ENCODE measurements at regions of chr1 and their contacts with region 1.

Region 1: DNA sequence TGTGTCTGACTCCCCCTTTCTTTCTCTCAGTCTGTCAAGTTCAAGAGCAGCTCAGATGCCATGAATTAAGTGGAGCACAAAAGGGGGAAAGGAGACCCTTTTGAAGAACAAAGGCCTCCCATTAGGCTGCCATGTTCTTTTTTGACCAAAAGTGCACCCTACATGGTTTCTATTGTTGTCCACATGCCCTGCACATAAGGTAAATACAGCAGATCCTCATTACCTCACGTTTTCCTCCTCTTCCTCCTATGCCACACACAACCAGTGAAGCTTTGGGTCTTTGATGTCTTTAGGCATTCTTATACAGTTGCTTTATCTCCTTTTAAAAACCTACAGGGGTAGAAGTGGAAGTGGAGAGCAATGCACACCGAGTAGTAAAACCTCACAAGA is 47.7 kb downstream of the POU2F1 start:
- DNase-seq: no peak
- ATAC-seq: no peak

Region 2: GRCh38 chr1:167244244-167244643 is 24.1 kb before region 1 on chr1:
- intact Hi-C with region 1: no loop called
- DNase-seq: no peak
- ATAC-seq: no peak

Region 3: DNA sequence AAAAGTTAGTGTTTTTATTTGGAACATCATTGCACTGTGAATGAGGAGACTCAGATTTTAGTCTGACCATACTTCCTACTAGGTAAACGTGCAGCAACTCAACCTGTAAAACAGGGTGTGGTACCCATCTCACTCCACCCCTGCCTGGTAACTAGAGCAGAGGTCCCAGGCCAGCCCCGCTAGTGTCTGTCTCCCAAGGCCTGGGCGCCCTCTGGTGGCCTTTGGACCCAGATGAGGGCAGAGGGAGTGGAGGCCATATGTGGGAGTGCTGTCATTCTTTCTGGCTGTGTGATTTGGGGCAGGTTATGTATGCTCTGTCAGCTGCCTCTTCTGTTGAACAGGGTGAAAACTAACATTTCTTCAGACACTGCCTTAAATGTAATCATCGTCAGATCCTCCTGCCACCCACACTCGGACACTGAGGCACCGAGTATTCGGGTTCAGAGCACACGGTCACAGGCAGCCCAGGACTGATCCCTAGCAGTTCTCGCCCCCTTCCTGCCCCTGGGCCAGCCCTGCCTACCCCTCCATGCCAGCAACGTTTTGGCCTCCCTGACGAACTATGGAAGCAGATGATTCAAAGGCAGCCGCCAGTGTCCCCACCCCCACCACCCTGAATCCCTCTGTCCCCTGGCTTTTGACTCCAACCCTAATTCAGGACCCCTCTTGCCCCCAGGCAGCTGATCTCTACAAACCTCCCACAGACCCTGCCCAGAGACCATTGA is 173.9 kb after region 1 on chr1:
- intact Hi-C with region 1: loop called (anchors 5 kb)
- DNase-seq: peak; percentile 94
- ATAC-seq: peak; percentile 97

Region 4: DNA sequence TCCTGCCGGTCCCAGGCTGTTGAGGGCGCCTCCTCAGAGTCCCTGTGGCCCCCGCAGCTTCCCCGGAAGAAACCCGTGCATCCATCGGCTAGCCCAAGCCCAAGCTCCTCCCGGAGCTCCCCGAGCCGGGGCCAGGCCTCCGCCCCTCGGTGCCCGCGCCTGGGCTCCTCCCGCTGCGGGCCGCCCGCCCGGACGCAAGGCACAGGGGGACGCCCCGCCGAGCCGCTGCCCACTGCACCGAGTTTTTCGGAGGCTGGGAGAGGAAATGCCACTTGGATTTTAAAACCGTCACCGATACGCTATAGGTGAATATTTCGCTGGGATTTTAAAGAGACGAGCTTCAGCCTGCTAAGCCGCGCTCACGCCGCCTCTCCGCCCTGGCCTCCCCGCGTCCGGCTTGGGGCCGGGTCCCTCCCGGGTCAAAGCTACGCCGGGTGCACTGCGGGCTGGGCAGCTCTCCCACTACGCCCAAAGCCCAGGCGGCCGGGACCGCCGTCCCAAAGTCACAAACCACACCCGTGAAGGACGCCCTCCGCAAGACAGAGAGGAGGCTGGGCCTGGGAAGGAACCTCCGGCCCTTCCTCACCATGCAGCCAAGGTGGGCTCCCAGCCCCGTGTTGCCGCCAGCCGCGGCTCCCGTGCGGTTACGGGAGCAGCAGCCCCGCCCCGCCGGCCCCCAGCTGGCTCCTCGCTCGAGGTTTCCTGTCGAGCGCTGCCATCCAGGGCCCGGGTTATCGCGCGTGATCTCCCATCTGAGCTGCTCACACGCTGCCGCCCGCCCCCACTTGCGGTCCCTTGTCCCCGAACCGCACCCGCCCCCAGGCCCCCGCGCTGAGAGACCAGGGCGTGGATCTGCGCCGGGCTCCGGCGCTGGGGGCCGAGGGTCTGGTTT is 186.7 kb after region 1 on chr1:
- intact Hi-C with region 1: no loop called
- DNase-seq: peak; percentile 78
- ATAC-seq: peak; percentile 91

Region 5: GRCh38 chr1:167533851-167534300 is 265.5 kb after region 1 on chr1:
- intact Hi-C with region 1: loop called (anchors 5 kb)
- DNase-seq: peak; percentile 72
- ATAC-seq: peak; percentile 92